ENCODE measurements at regions of chr10 and their contacts with region 1.

Region 1: DNA sequence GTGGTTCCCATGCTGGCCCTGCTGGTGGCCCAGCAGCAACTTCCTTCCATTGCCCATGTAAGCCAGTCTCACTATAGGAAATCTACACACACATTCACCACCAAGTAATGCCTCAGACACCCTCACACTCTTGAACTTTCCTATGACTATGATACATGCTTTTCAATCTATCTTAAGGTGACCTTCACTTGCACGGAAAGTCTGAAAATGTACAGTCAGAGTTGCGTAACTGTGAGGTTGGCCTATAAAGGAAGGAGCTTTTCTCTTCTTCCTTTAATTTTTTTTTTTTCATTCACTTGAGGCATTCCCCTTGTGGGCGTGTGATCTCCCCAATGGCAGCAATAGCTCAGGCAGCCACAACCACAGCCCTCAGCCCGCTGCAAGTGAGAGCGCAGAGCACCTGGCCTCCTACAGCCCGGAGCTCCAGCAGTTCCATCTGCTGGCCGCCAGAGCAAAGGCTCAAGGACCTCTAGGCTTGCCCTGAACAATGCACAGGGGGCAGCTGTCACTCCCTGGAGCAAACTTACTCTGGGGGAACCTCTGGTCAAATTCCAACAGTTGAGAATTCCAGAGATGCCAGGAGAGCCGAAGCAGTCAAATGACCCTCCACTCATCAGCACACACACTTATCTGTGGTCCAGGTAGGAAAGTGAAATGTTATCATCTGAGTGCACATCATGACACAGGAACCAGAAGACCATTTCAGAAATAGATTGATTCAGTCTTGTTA is 123.1 kb upstream of the ADO start:
- DNase-seq: peak; percentile 92
- H3K4me3 Mint-ChIP-seq: peak overlapping the region; percentile 31
- H3K27ac Mint-ChIP-seq: peak overlapping the region; percentile 72
- H3K4me1 Mint-ChIP-seq: peaks cover 48% of the 10 kb centered on the region
- H3K27me3 Mint-ChIP-seq: peaks cover 1% of the 10 kb centered on the region

Region 2: GRCh38 chr10:62610649-62611229 is 70.6 kb before region 1 on chr10:
- intact Hi-C with region 1: loop called (anchors 1 kb)
- DNase-seq: peak; percentile 93
- H3K4me3 Mint-ChIP-seq: no peak overlapping the region
- H3K27ac Mint-ChIP-seq: peak overlapping the region; percentile 27
- H3K4me1 Mint-ChIP-seq: peaks cover 46% of the 10 kb centered on the region
- H3K27me3 Mint-ChIP-seq: peaks cover 5% of the 10 kb centered on the region

Region 3: GRCh38 chr10:62655337-62655994 is 25.9 kb before region 1 on chr10:
- intact Hi-C with region 1: loop called (anchors 2 kb)
- DNase-seq: no peak
- H3K4me3 Mint-ChIP-seq: no peak overlapping the region
- H3K27ac Mint-ChIP-seq: peak overlapping the region; percentile 71
- H3K4me1 Mint-ChIP-seq: peaks cover 30% of the 10 kb centered on the region
- H3K27me3 Mint-ChIP-seq: peaks cover 3% of the 10 kb centered on the region

Region 4: DNA sequence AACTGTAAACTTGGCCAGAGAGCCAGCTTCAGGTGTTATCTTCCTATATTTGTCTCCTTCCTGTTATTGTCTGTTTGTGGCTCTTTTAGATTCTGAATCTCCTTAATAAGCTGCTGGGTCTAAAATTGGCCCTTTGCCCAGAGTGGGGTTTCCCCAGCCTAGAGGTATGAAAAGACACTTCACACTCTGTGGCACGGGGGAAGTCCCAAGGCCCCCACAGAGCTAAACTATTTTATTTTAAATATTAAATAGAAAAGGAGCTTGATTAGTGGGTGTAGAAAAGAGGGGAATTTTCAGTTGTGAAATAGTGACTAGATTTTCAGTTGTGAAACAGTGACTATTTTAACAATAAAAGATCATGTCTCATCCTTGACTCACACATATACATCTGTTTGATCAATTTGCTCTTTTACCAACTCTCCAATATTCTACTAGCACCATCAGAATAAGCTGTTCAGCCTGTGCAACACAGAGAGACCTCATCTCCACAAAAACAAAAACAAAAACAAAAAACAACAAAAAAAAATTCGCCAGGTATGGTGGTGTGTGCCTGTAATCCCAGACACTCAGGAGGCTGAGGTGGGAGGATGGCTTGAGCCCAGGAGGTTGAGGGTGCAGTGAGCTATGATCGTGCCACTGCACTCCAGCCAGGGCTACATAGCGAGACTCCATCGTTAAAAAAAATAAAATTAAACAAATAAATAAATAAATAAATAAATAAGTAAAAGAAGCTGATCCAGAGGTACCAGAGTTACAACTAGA is 98.3 kb after region 1 on chr10:
- intact Hi-C with region 1: loop called (anchors 1 kb)
- DNase-seq: peak; percentile 84
- H3K4me3 Mint-ChIP-seq: peak overlapping the region; percentile 42
- H3K27ac Mint-ChIP-seq: peak overlapping the region; percentile 68
- H3K4me1 Mint-ChIP-seq: peaks cover 31% of the 10 kb centered on the region
- H3K27me3 Mint-ChIP-seq: peaks cover 12% of the 10 kb centered on the region

Region 5: DNA sequence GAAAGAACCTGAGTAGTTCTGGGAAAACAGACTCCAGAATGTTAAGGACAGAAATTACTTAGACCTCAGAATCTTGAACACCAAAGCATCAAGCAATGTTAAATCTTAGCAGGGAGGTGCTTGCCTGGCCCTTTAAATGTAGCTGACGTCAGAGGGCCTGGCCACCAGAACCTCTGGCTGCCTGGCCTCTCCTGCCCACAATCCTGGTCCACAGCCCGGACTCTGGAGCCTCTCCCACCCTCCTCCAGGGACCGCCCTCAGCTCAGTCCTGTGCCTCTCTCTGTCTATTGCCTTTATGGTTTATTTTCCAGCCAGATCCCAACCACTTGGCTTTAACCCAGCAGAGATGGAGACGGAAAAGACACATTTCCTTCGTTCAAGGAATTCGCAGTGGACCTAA is 177.0 kb after region 1 on chr10:
- intact Hi-C with region 1: loop called (anchors 1 kb)
- DNase-seq: no peak
- H3K4me3 Mint-ChIP-seq: no peak overlapping the region
- H3K27ac Mint-ChIP-seq: no peak overlapping the region
- H3K4me1 Mint-ChIP-seq: peaks cover 60% of the 10 kb centered on the region
- H3K27me3 Mint-ChIP-seq: peaks cover 4% of the 10 kb centered on the region

Region 6: DNA sequence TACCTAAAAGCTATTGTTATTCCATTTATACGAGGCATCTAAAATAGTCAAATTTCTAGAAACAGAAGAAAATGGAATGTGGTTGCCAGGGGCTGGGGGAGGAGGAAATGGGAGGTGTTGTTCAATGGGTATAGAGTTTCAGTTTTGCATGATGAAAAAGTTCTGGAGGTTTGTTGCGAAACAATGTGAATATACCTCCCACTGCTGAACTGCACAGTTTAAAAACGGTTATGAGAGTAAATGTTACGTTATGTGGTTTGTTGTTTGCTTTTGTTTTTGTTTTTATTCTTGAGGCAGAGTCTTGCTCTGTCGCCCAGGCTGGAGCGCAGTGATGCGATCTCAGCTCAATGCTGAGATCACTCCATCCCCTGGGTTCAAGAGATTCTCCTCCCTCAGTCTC is 386.9 kb after region 1 on chr10:
- intact Hi-C with region 1: loop called (anchors 10 kb)
- DNase-seq: peak; percentile 70
- H3K4me3 Mint-ChIP-seq: peak overlapping the region; percentile 49
- H3K27ac Mint-ChIP-seq: peak overlapping the region; percentile 34
- H3K4me1 Mint-ChIP-seq: peaks cover 38% of the 10 kb centered on the region
- H3K27me3 Mint-ChIP-seq: peaks cover 15% of the 10 kb centered on the region

Measured in activated CD4-positive, alpha-beta T cell treated with anti-CD3 and anti-CD28 coated beads, Interleukin-2, amount 10 ng/mL, durations not matched to agents 24 days and 14 days (primary cell).